Left ventricle myocardium inferior (tissue), 1 donor: ENCODE measurements at regions of chr14 and their contacts with region 1.

Region 1: DNA sequence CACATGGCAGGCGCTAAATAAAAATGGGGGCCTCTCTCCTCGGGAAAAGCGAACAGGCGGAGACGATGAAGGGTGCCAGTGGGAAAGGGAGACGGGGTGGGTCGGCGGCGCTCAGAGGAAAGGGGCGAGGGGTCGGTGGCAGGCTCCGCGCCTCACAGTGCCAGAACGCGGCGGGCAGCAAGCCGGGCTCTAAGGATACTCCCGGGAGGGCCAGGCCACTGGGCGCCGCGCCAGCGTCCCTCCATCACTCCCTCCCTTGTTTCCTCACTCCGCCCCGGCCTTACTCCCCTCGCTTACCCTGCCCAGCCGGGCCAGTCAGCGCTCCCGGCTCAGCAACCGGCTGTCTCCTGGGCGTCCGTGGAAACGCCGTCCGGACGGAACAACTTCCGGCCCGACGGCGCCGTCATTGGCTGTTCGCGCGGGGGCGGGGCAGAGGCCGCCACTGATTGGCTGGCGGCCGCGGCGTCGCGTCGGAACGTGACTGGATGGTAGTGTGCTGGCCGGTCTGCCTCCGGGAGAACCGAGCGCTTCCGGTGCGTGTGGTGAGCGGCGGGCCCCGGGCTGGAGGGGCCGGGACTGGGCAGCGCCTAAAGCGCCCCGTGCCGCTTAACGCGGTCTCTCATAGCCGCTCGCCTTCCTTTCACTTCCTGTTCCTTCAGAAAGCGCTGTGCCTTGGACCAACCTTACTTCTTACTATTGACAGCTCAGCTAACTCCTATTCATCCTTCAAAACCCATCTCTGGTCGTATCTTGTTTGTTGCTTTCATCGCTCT is 53.0 kb downstream of the SLC25A47 start:
- DNase-seq: peak; percentile 94
- H3K4me3 ChIP-seq: peak within 1 kb of the TSS; percentile 83
- H3K27ac ChIP-seq: peak within 1 kb of the TSS; percentile 96
- H3K4me1 ChIP-seq: peaks cover 53% of the 10 kb centered on the region
- H3K27me3 ChIP-seq: no peaks in the 10 kb centered on the region
- CTCF ChIP-seq: no peak

Region 2: GRCh38 chr14:100285021-100285912 is 90.9 kb before region 1 on chr14:
- intact Hi-C with region 1: loop called (anchors 10 kb)
- DNase-seq: peak; percentile 68
- H3K4me3 ChIP-seq: peak overlapping the region; percentile 94
- H3K27ac ChIP-seq: peak overlapping the region; percentile 94
- H3K4me1 ChIP-seq: peaks cover 80% of the 10 kb centered on the region
- H3K27me3 ChIP-seq: no peaks in the 10 kb centered on the region
- CTCF ChIP-seq: peak; percentile 69